Common myeloid progenitor, CD34-positive (primary cell): ENCODE measurements at regions of chr6 and their contacts with region 1.

Region 1: GRCh38 chr6:131199568-131200272 is 64.5 kb downstream of the AKAP7 start:
- DNase-seq: peak; percentile 94 to 98 (median 97)
- H3K4me3 ChIP-seq: peak overlapping the region in 3 of 7 experiments; percentile 16 to 45 (median 43)
- H3K27ac ChIP-seq: peak overlapping the region in 1 of 2 experiments; percentile 44
- H3K4me1 ChIP-seq: peaks cover 22 to 40% (median 32%) of the 10 kb centered on the region in 4 experiments
- H3K27me3 ChIP-seq: no peaks in the 10 kb centered on the region

Region 2: GRCh38 chr6:131532580-131533039 is 332.9 kb after region 1 on chr6:
- CTCF ChIA-PET with region 1: interaction called, 42 read pairs
- POLR2A ChIA-PET with region 1: no interaction called
- DNase-seq: no peak
- H3K4me3 ChIP-seq: no peak overlapping the region
- H3K27ac ChIP-seq: no peak overlapping the region
- H3K4me1 ChIP-seq: peaks cover 0 to 9% (median 0%) of the 10 kb centered on the region in 4 experiments
- H3K27me3 ChIP-seq: no peaks in the 10 kb centered on the region